MCF 10A (cell line): ENCODE measurements at regions of chr6 and their contacts with region 1.

Region 1: GRCh38 chr6:28895134-28895812 is 28.5 kb downstream of the TRIM27 start:
- DNase-seq: peak; percentile 96
- H3K4me3 Mint-ChIP-seq: peak overlapping the region; percentile 90
- H3K27ac Mint-ChIP-seq: peak overlapping the region; percentile 100
- H3K4me1 Mint-ChIP-seq: no peaks in the 10 kb centered on the region
- H3K27me3 Mint-ChIP-seq: no peaks in the 10 kb centered on the region
- CTCF ChIP-seq: no peak

Region 2: DNA sequence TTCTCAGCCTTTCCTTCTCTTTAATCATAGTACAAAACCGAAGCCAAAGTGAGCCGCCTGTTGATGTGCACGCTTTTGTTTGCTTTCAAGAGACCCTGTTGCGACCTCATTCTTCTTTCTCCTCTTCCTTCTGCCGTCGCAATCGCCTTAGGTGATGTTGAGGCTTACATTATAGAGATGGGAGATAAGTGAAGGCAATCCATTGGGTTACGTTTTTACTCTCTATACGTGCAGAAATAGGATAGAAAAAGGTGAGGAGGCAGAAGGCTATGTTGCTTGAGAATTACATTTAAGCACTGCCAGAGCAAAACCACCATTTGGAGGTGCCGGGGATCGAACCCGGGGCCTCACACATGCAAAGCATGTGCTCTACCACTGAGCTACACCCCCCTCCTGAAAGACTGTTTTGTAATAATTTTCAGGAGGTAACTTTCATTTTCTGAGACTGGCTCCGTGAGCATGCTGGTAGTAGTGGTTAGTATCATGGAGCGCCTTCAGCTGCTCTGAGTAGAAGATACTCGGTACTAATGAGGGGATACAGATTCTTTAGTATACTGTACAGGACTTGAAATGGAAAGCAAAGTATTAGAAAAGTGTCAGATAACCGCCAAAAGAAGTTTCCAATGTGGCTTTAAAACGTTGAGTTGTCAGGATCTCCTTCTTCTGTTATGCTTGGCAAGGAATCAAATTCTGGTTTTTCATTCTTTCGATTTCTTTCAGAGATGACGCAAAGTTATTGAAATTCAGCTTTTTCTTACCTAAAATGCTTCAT is 137.0 kb before region 1 on chr6:
- CTCF ChIA-PET with region 1: no interaction called
- POLR2A ChIA-PET with region 1: no interaction called
- intact Hi-C with region 1: loop called (anchors 5 kb)
- DNase-seq: peak; percentile 86
- H3K4me3 Mint-ChIP-seq: peak overlapping the region; percentile 85
- H3K27ac Mint-ChIP-seq: peak overlapping the region; percentile 68
- H3K4me1 Mint-ChIP-seq: peaks cover 24% of the 10 kb centered on the region
- H3K27me3 Mint-ChIP-seq: no peaks in the 10 kb centered on the region
- CTCF ChIP-seq: no peak

Region 3: GRCh38 chr6:28880894-28881780 is 14.1 kb before region 1 on chr6:
- CTCF ChIA-PET with region 1: interaction called, 4 read pairs
- POLR2A ChIA-PET with region 1: interaction called, 60 read pairs
- intact Hi-C with region 1: no loop called
- DNase-seq: peak; percentile 78
- H3K4me3 Mint-ChIP-seq: peak overlapping the region; percentile 86
- H3K27ac Mint-ChIP-seq: peak overlapping the region; percentile 8
- H3K4me1 Mint-ChIP-seq: peaks cover 6% of the 10 kb centered on the region
- H3K27me3 Mint-ChIP-seq: peaks cover 21% of the 10 kb centered on the region
- CTCF ChIP-seq: no peak

Region 4: GRCh38 chr6:28923318-28924102 is 28.2 kb after region 1 on chr6 and contains the start of gene TRIM27:
- CTCF ChIA-PET with region 1: interaction called, 3 read pairs
- POLR2A ChIA-PET with region 1: interaction called, 156 read pairs
- intact Hi-C with region 1: loop called (anchors 1 kb)
- DNase-seq: peak; percentile 92
- H3K4me3 Mint-ChIP-seq: peak within 1 kb of the TSS; percentile 93
- H3K27ac Mint-ChIP-seq: peak within 1 kb of the TSS; percentile 88
- H3K4me1 Mint-ChIP-seq: peaks cover 19% of the 10 kb centered on the region
- H3K27me3 Mint-ChIP-seq: no peaks in the 10 kb centered on the region
- CTCF ChIP-seq: no peak
- total RNA-seq, gene TRIM27: 68.8 and 68.9 TPM in 2 replicates